T-cell (primary cell): ENCODE measurements at regions of chr4 and their contacts with region 1.

Region 1: GRCh38 chr4:44678094-44679041 is at the start of gene GUF1:
- DNase-seq: peak; percentile 73 to 94 (median 89)
- ATAC-seq: peak; percentile 90 to 94 (median 93)
- H3K4me3 ChIP-seq: peak within 1 kb of the TSS; percentile 78 to 84
- H3K4me3 Mint-ChIP-seq: peak within 1 kb of the TSS; percentile 93 to 97 (median 96)
- H3K27ac ChIP-seq: peak within 1 kb of the TSS; percentile 95
- H3K27ac Mint-ChIP-seq: peak within 1 kb of the TSS; percentile 98 to 99
- H3K4me1 ChIP-seq: peaks cover 14 to 22% of the 10 kb centered on the region in 2 experiments
- H3K4me1 Mint-ChIP-seq: peaks cover 27 to 44% (median 32%) of the 10 kb centered on the region in 3 donors
- H3K27me3 ChIP-seq: no peaks in the 10 kb centered on the region
- H3K27me3 Mint-ChIP-seq: no peaks in the 10 kb centered on the region
- total RNA-seq, gene GUF1: 16.2 to 23.8 (median 21.2) TPM

Region 2: DNA sequence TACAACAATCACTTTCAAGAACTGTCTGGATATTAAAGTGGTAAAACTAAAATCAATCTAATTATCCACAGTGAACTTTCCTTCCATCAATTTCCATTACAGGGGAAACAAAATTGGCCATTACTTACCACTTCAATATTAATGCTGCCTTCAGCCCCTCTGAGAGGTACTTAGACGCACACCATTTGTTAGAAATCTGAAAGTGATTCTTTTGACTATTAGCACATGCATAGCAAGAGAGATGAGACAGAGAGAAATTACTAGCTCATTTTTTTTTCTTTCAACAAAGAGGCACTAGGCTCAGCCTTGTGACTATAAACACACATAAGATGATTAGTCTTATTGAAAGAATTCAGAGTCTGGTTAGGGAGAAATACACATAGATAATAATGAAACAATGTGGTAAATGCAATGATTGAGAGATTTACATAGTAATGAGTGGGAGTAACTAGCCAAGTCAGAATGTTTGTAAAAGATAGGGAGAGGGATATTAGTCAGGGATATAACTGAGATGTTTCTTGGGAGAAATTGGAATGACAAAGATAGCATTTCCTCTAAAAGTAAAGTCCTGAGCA is 120.2 kb before region 1 on chr4:
- CTCF ChIA-PET with region 1: no interaction called
- POLR2A ChIA-PET with region 1: no interaction called
- DNase-seq: no peak
- ATAC-seq: no peak
- H3K4me3 ChIP-seq: no peak overlapping the region
- H3K4me3 Mint-ChIP-seq: no peak overlapping the region
- H3K27ac ChIP-seq: no peak overlapping the region
- H3K27ac Mint-ChIP-seq: no peak overlapping the region
- H3K4me1 ChIP-seq: no peaks in the 10 kb centered on the region
- H3K4me1 Mint-ChIP-seq: no peaks in the 10 kb centered on the region
- H3K27me3 ChIP-seq: no peaks in the 10 kb centered on the region
- H3K27me3 Mint-ChIP-seq: peaks cover 0 to 4% of the 10 kb centered on the region in 2 donors

Region 3: GRCh38 chr4:44713125-44713524 is 34.8 kb after region 1 on chr4:
- CTCF ChIA-PET with region 1: interaction called, 3 to 11 read pairs
- POLR2A ChIA-PET with region 1: interaction called, 3 to 9 read pairs
- DNase-seq: no peak
- ATAC-seq: no peak
- H3K4me3 ChIP-seq: no peak overlapping the region
- H3K4me3 Mint-ChIP-seq: no peak overlapping the region
- H3K27ac ChIP-seq: no peak overlapping the region
- H3K27ac Mint-ChIP-seq: no peak overlapping the region
- H3K4me1 ChIP-seq: no peaks in the 10 kb centered on the region
- H3K4me1 Mint-ChIP-seq: peaks cover 1 to 7% (median 3%) of the 10 kb centered on the region in 3 donors
- H3K27me3 ChIP-seq: no peaks in the 10 kb centered on the region
- H3K27me3 Mint-ChIP-seq: no peaks in the 10 kb centered on the region

Region 4: DNA sequence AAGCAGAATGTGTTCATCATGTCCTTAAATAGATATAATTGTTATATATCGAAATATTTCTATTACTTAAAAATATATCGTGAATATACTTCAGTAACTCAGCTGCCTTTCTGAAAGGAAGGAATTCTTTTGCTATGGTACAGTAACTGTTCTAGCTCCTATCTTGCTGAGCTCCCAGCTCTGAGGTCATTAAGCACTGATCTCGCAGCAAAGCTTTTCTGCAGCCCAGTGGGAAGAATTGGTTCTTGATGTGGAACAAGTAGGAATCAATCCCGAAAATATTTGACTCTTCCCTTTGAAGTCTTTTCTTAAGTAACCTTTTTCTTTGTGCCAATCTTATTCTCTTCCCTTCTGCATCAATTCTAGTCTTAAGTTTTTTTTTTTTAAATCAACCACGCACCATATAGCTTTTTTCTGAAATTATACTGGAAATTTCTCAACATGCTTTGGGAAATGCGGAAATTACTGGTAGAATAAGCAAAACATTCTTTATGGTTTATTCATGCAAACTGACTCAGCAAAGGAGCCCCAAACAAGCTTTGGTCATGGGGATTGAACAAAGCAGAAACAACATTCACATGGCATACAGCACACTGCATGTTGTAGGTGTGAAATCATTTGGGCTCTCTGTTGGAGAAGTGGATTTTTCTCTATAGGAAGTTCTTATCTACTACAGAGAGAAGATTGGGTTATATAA is 476.9 kb after region 1 on chr4:
- CTCF ChIA-PET with region 1: no interaction called
- POLR2A ChIA-PET with region 1: no interaction called
- DNase-seq: no peak
- ATAC-seq: no peak
- H3K4me3 ChIP-seq: no peak overlapping the region
- H3K4me3 Mint-ChIP-seq: no peak overlapping the region
- H3K27ac ChIP-seq: no peak overlapping the region
- H3K27ac Mint-ChIP-seq: no peak overlapping the region
- H3K4me1 ChIP-seq: no peaks in the 10 kb centered on the region
- H3K4me1 Mint-ChIP-seq: no peaks in the 10 kb centered on the region
- H3K27me3 ChIP-seq: no peaks in the 10 kb centered on the region
- H3K27me3 Mint-ChIP-seq: no peaks in the 10 kb centered on the region